ENCODE measurements at regions of chr7 and their contacts with region 1.

Region 1: DNA sequence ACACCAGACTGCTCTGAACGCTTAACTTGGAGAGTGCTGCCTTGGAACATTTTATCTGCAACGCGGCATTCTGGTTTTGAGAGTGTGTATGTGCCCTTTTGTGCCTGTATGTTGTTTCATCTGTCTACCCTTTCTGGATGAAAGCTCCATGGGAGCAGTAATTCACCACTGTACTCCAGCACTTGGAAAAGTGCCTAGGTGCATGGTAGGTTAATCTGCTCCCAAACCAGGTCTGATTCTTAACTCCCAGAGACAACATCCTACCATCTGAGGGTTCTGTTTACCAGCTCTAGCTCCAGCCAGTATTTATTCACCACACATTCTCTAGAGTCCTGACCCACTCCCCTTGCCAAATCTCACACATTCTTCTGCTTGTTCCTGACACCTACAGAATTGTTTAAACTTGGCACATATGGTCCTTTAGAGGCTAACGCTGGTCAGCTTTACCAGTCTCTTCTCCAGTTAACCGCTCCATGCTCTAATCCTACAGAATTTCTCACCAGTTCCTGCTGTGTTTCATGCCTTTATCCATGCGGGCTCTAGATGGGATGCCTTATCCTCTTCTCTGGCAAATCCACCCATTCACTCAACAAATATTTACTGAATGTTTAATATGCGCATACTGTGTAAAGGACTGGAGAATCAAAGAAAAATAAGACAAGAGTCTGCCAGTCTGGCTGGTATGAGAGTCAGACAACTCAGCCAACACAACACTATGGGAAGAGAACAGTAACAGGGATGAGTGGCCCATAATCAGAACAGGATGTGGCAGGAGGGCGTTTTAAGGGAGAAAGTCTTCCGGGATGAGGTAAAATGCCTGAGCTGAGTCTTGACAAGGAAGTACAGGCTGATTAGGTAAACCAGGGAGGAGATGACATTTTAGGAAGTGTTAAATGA is 46.3 kb downstream of the MTPN start:
- DNase-seq: no peak
- ATAC-seq: peak; percentile 81

Region 2: DNA sequence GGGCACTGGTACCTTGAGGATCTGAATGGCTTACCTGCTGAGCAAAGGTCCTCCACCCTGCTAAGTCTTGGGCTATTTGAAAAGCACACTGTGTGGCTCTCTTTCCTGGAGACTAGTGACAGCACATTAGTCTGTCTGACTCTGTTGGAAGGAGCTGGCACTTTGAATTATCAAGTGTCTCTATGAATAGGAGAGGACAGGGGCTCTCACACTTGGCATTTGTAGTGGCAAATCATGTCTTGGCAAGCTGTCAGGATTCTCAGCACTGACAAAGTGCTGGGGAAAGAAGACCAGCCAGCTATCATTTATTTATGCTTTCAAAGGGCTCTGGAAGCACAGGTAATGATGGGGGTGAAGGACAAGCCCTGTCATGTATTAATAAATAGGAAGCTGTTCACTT is 16.5 kb before region 1 on chr7:
- intact Hi-C with region 1: loop called (anchors 2 kb)
- DNase-seq: no peak
- ATAC-seq: peak; percentile 92

Region 3: DNA sequence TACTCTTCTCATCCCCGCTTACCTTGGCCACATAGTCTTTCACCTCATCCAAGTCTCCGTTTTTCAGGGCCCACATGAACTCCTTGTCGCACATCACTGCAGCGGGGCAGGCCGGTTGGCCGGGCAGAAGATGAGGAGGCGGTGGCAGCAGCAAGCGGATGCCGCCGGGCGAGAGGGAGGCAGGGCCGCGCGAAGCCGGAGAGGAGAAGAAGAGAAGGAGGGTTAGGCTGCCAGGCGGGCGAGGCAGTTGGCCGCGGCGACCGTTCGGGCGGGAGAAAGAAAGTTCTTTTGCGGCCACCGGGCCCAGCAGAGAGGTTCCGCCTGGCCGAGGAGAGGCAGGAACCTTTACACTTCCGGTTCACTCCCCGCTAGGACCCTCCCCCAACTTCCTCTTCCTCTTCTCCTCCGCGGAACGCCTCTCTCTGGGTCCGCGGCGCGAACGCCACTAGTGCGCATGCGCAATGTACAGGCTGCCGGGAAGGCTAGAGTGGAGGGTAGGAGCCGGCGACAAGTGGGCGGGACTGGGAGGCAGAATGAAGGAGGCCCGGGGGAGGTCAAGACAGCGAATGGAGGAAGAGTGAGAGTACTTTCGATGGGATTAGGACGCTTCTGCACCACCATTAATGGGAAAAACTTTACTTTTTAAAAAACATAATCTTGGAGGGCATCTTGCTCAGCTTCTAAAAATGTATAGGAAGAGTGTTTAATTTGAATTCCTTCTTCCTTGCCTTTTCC is 46.4 kb after region 1 on chr7 and contains the start of gene MTPN:
- intact Hi-C with region 1: loop called (anchors 5 kb)
- DNase-seq: peak; percentile 100
- ATAC-seq: peak; percentile 100
- total RNA-seq, gene MTPN: 72.9 TPM

Region 4: GRCh38 chr7:136312592-136312991 is 381.8 kb after region 1 on chr7:
- intact Hi-C with region 1: no loop called
- DNase-seq: no peak
- ATAC-seq: no peak